Aorta (tissue), 5 donors: ENCODE measurements at regions of chr21 and their contacts with region 1.

Region 1: DNA sequence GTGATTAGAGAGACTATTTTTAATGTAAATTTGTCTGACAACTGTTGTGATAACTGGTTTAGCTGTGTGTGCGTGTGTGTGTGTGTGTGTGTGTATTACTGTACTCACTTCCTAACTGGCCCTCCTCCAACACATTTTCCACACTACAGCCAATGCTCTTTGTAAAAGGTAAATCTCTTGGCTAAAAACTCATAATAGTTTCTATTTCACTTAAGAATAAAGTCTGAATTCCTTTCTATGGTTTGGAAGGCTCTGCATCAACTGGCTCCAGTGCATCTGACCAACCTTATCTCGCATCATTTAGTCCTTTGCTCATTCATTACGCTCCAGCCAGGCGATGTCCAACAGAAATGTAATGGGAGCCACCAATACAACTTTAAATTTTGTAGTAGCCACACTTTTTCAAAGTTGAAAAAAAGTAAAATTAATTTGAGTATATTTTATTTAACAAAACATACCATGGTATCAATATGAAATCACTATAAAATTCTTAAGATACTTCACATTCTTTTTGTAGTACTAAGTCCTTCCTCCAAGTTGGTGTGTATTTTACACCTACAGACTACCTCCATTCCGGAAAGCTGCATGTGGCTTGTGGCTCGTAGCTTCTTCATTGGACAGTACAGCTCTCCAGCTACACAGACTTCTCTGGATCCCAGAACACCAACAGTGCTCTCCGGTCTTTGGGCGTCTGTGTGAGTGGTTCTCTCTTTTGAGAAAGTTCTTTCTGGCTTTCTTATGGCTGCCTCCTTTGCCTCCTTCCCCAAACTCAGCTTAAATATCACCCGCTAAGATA is 68.9 kb downstream of the NRIP1 start:
- DNase-seq: no peak
- ATAC-seq: no peak
- H3K4me3 ChIP-seq: no peak overlapping the region
- H3K27ac ChIP-seq: no peak overlapping the region
- H3K4me1 ChIP-seq: peaks cover 0 to 6% of the 10 kb centered on the region in 2 donors
- H3K27me3 ChIP-seq: no peaks in the 10 kb centered on the region

Region 2: GRCh38 chr21:15051644-15052458 is 56.0 kb after region 1 on chr21:
- intact Hi-C with region 1: loop called in 1 of 2 experiments (anchors 10 kb)
- DNase-seq: no peak
- ATAC-seq: no peak
- H3K4me3 ChIP-seq: no peak overlapping the region
- H3K27ac ChIP-seq: no peak overlapping the region
- H3K4me1 ChIP-seq: peaks cover 0 to 7% of the 10 kb centered on the region in 2 donors
- H3K27me3 ChIP-seq: no peaks in the 10 kb centered on the region

Region 3: DNA sequence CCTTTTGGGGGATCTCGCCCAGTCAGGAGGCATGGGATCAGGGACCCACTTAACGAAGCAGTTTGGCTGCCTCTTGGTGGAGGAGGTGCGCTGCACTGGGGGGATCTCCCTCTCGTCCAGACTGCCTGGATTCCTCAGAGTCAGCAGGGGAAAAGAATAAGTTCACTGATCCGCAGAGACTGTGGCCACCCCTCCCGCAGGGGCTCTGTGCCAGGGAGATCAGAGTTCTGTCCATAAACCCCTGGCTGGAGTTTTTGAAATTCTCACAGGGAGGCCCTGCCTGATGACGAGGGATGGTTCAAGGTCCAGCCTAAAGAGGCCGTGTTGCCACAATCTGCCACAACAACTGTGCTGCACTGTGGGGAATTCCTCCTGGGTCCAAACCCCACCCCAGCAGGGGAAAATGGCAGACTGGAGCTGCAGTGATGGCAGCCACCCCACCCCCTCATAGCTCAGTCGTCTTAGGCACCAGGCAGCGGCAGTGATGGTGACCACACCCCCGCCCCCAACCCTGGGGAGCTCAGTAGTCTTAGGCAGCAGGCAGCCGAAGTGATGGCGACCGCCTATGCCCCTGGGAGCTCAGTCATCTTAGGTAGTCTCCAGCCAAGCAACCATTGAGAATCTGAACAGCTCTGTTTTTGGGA is 460.0 kb after region 1 on chr21:
- intact Hi-C with region 1: no loop called
- DNase-seq: no peak
- ATAC-seq: no peak
- H3K4me3 ChIP-seq: no peak overlapping the region
- H3K27ac ChIP-seq: no peak overlapping the region
- H3K4me1 ChIP-seq: no peaks in the 10 kb centered on the region
- H3K27me3 ChIP-seq: no peaks in the 10 kb centered on the region